ENCODE measurements at regions of chr5 and their contacts with region 1.

Region 1: DNA sequence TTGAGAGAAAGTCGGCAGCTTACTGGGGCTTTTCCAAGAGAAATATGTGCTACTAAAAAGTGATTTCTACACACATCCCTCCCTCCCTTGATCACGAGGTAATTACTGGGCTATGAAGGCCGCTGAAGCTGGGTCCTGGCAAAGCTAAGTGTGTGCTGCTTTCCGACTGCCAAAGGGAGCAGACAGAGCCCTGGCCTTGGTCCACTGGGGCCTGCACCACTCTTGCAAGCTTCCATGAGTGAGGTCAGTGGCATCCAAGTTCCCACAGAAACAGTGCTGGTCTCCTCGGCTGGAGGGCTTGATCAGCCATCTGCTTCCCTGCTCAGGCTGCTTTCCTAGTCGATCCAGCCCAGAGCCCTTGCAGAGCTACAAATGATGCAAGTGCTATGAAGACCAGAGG is 154.8 kb upstream of the LHFPL2 start:
- DNase-seq: peak; percentile 56 to 75
- ATAC-seq: peak; percentile 72 to 92 (median 82)
- H3K4me3 ChIP-seq: no peak overlapping the region
- H3K27ac ChIP-seq: peak overlapping the region in 4 of 10 donors; percentile 8 to 53 (median 28)
- H3K4me1 ChIP-seq: peaks cover 0 to 41% (median 3%) of the 10 kb centered on the region in 9 donors
- H3K27me3 ChIP-seq: no peaks in the 10 kb centered on the region
- CTCF ChIP-seq: no peak

Region 2: GRCh38 chr5:78269088-78269703 is 534.2 kb before region 1 on chr5:
- intact Hi-C with region 1: no loop called
- DNase-seq: no peak
- ATAC-seq: no peak
- H3K4me3 ChIP-seq: no peak overlapping the region
- H3K27ac ChIP-seq: peak overlapping the region in 2 of 10 donors; percentile 7 to 21
- H3K4me1 ChIP-seq: peaks cover 0 to 30% (median 18%) of the 10 kb centered on the region in 9 donors
- H3K27me3 ChIP-seq: no peaks in the 10 kb centered on the region
- CTCF ChIP-seq: peak; percentile 13 to 66 (median 54)

Region 3: DNA sequence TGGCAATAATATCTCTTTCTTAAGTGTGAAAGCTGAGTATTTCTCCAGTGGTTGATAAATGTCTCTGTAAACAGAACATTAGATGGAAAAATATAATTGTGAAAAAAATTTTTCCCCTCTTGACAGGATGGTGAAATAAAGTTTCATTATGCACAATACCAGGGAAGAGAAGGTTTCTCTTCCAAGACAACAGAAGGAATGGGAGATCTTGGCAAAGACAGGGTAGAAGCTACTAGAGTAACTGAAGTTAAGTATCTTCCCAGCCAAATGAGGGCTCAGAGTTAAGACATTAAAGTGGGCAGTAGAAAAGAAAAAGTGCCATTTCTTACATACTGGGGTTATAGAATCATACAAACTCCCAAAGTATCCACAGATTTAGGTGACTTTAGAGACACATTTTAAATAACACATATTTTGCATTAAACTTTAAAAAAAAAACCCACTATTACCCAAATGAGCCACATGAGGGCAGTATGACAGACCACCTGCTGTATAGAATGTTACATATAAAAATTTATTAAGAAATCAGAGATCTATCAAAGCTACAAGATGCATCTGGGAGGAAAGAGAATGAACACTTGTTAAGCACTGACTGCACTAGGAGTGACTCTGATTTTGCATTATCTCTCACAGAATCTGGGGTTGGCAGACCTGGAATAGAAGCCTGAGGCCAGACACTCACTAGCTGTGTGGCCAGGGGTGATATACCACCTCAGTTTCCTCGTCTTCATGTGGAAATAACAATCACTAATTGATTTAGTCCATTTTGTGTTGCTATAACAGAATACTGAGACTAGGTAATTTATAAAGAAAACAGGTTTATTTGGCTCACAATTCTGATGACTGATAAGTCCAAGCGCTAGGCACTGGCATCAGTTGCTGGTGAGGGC is 83.2 kb after region 1 on chr5:
- intact Hi-C with region 1: loop called in 1 of 10 experiments (anchors 10 kb)
- DNase-seq: no peak
- ATAC-seq: no peak
- H3K4me3 ChIP-seq: no peak overlapping the region
- H3K27ac ChIP-seq: no peak overlapping the region
- H3K4me1 ChIP-seq: peaks cover 0 to 24% (median 11%) of the 10 kb centered on the region in 9 donors
- H3K27me3 ChIP-seq: no peaks in the 10 kb centered on the region
- CTCF ChIP-seq: peak in 8 of 9 donors; percentile 43 to 71 (median 60)